GM12878 (cell line): ENCODE measurements at regions of chr1 and their contacts with region 1.

Region 1: GRCh38 chr1:7745791-7746190 is 25.3 kb upstream of the VAMP3 start:
- DNase-seq: no peak
- ATAC-seq: no peak
- H3K4me3 ChIP-seq: no peak overlapping the region
- H3K27ac ChIP-seq: no peak overlapping the region
- H3K4me1 ChIP-seq: no peaks in the 10 kb centered on the region
- H3K27me3 ChIP-seq: 0 out of 4 replicates have a peak, but pooled peaks cover 0 to 1% of the 10 kb centered on the region in 2 experiments
- CTCF ChIP-seq: no peak
- EP300 ChIP-seq: no peak
- POLR2A ChIP-seq: no peak
- RAD21 ChIP-seq: no peak

Region 2: GRCh38 chr1:6148497-6149241 is 1597.1 kb before region 1 on chr1:
- CTCF ChIA-PET with region 1: no interaction called
- POLR2A ChIA-PET with region 1: no interaction called
- RAD21 ChIA-PET with region 1: no interaction called
- SMC1A ChIA-PET with region 1: no interaction called
- in situ Hi-C with region 1: no loop called
- intact Hi-C with region 1: no loop called
- DNase-seq: no peak
- ATAC-seq: peak; percentile 59
- H3K4me3 ChIP-seq: no peak overlapping the region
- H3K27ac ChIP-seq: no peak overlapping the region
- H3K4me1 ChIP-seq: no peaks in the 10 kb centered on the region
- H3K27me3 ChIP-seq: no peaks in the 10 kb centered on the region; a peak in 1 of 4 replicates
- CTCF ChIP-seq: no peak
- EP300 ChIP-seq: no peak
- POLR2A ChIP-seq: no peak
- RAD21 ChIP-seq: no peak

Region 3: GRCh38 chr1:7418442-7419080 is 327.2 kb before region 1 on chr1:
- CTCF ChIA-PET with region 1: no interaction called
- POLR2A ChIA-PET with region 1: no interaction called
- RAD21 ChIA-PET with region 1: no interaction called
- SMC1A ChIA-PET with region 1: no interaction called
- in situ Hi-C with region 1: no loop called
- intact Hi-C with region 1: no loop called
- DNase-seq: no peak
- ATAC-seq: no peak
- H3K4me3 ChIP-seq: no peak overlapping the region
- H3K27ac ChIP-seq: no peak overlapping the region
- H3K4me1 ChIP-seq: no peaks in the 10 kb centered on the region
- H3K27me3 ChIP-seq: no peaks in the 10 kb centered on the region
- CTCF ChIP-seq: no peak
- EP300 ChIP-seq: no peak
- POLR2A ChIP-seq: no peak
- RAD21 ChIP-seq: no peak

Region 4: GRCh38 chr1:7667625-7668218 is 78.1 kb before region 1 on chr1:
- CTCF ChIA-PET with region 1: interaction called, 208 read pairs
- POLR2A ChIA-PET with region 1: no interaction called
- RAD21 ChIA-PET with region 1: interaction called, 3 read pairs
- SMC1A ChIA-PET with region 1: no interaction called
- in situ Hi-C with region 1: loop called (anchors 5 kb)
- intact Hi-C with region 1: no loop called
- DNase-seq: peak; percentile 11
- ATAC-seq: peak; percentile 93
- H3K4me3 ChIP-seq: no peak overlapping the region
- H3K27ac ChIP-seq: no peak overlapping the region
- H3K4me1 ChIP-seq: no peaks in the 10 kb centered on the region
- H3K27me3 ChIP-seq: no peaks in the 10 kb centered on the region; a peak in 1 of 4 replicates
- CTCF ChIP-seq: peak; percentile 98 to 99 (median 99); a peak in 5 of 6 replicates
- EP300 ChIP-seq: no peak
- POLR2A ChIP-seq: no peak
- RAD21 ChIP-seq: peak; percentile 95